ENCODE measurements at regions of chr5 and their contacts with region 1.

Region 1: GRCh38 chr5:2751592-2752021 is at the start of gene IRX2:
- DNase-seq: no peak
- H3K4me3 Mint-ChIP-seq: no peak within 1 kb of the TSS
- H3K27ac Mint-ChIP-seq: peak within 1 kb of the TSS; percentile 22
- H3K4me1 Mint-ChIP-seq: peaks cover 3% of the 10 kb centered on the region
- H3K27me3 Mint-ChIP-seq: peaks cover 55% of the 10 kb centered on the region
- total RNA-seq, gene IRX2: not detected in 2 replicates

Region 2: GRCh38 chr5:1883120-1883924 is 868.3 kb before region 1 on chr5:
- intact Hi-C with region 1: loop called (anchors 5 kb)
- DNase-seq: no peak
- H3K4me3 Mint-ChIP-seq: no peak overlapping the region
- H3K27ac Mint-ChIP-seq: no peak overlapping the region
- H3K4me1 Mint-ChIP-seq: no peaks in the 10 kb centered on the region
- H3K27me3 Mint-ChIP-seq: peaks cover 45% of the 10 kb centered on the region

Region 3: DNA sequence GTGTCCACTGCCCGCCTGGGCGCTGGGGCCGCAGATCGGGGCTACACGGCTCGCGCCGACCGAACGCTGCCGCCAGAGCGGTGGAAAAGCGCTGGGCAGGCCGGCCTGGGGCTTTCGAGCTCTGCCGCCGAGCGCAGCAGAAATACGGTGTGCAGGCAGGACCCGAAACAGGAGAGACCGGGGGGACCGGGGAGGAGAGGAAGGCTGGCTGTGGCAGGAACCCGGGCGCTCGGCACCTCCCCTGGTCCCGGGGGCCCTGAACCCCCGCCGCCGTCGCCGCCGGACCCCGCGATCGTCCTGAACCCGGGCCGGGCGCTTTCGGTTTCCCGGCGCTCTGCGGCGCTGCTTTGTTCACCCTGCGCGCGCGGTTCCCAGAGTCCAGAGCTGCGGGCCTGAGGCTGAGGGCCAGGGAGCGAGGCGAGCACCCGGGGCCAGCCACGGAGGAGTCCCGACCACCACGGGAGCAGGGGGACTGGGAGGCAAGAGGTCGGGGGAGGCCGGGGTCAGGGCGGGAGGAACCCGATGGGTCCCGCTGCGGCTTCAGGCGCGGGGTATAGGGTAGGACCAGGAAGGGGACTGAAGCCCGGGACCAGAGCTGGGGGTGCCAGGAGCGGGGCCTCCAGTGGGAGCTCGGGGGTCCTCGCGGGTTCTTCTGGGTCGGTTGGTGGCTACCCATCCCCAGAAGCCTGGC is 12.1 kb before region 1 on chr5:
- intact Hi-C with region 1: loop called (anchors 2 kb)
- DNase-seq: no peak
- H3K4me3 Mint-ChIP-seq: no peak overlapping the region
- H3K27ac Mint-ChIP-seq: no peak overlapping the region
- H3K4me1 Mint-ChIP-seq: no peaks in the 10 kb centered on the region
- H3K27me3 Mint-ChIP-seq: peaks cover 47% of the 10 kb centered on the region

Region 4: DNA sequence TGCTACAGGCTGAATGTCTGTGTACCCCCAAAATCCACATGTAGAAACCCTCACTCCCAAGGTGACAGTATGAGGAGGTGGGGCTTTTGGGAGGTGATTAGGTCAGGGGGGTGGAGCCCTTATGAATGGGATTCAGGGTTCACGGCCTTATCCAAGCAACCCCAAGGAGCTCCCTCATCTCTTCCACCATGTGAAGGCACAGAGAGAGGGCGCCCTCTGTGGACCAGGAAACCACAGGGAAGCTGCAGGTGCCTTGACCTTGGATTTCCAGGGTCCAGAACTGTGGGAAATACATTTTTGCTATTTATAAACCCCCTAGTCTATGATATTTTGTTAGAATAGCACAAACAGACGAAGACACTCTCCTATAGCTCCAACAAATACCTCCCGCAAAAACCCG is 53.5 kb after region 1 on chr5:
- intact Hi-C with region 1: no loop called
- DNase-seq: no peak
- H3K4me3 Mint-ChIP-seq: no peak overlapping the region
- H3K27ac Mint-ChIP-seq: no peak overlapping the region
- H3K4me1 Mint-ChIP-seq: no peaks in the 10 kb centered on the region
- H3K27me3 Mint-ChIP-seq: no peaks in the 10 kb centered on the region

Region 5: GRCh38 chr5:3595006-3595961 is 843.7 kb after region 1 on chr5 and contains the start of gene IRX1:
- intact Hi-C with region 1: loop called (anchors 5 kb)
- DNase-seq: no peak
- H3K4me3 Mint-ChIP-seq: no peak within 1 kb of the TSS
- H3K27ac Mint-ChIP-seq: no peak within 1 kb of the TSS
- H3K4me1 Mint-ChIP-seq: no peaks in the 10 kb centered on the region
- H3K27me3 Mint-ChIP-seq: peaks cover 57% of the 10 kb centered on the region
- total RNA-seq, gene IRX1: not detected in 2 replicates